Activated B cell treated with CpG ODN at 0.5 μM for 24 hours (primary cell): ENCODE measurements at regions of chr16 and their contacts with region 1.

Region 1: GRCh38 chr16:30724641-30725417 is 23.4 kb upstream of the PHKG2 start:
- DNase-seq: no peak
- ATAC-seq: peak; percentile 25
- H3K4me3 Mint-ChIP-seq: no peak overlapping the region
- H3K27ac Mint-ChIP-seq: no peak overlapping the region
- H3K4me1 Mint-ChIP-seq: peaks cover 18% of the 10 kb centered on the region
- H3K27me3 Mint-ChIP-seq: no peaks in the 10 kb centered on the region
- CTCF ChIP-seq: no peak

Region 2: DNA sequence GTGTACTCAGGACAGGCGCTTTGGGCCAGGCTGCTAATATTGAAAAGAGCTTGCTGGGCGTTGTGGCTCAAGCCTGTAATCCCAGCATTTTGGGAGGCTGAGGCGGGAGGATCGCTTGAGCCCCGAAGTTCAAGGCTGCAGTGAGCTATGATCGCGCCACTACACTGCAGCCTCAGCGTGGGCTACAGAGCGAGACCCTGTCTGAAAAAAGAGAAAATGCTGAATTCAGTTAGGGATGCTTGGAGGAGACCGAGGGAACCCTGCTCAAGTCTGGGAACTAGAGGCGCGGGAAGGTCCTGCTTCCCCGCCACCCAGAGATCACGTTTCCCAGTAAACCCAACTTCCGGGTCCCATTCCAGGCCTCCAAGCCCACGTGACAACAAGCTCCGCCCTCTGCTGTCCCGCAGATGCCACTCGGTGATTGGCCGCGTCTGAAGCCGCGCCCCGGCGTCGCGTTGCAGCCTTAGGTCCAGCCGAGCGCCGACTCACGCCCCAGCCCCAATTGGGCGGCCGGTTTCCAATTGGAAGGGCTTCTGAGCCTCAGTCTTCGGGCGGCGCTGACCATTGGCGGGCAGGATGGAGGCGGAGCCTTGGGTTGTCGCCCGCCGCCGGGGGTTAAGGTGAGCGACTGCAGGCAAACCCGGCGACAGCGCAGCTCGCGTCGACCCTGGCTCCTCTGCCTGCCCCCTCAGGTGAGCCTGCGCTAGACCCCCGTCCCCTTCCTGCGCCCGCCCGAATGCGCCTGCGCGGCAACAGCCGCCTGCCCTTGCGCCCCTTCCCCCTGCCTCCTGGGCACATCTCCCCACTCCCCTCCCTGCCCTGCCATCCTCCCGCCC is 23.2 kb after region 1 on chr16 and contains the start of gene PHKG2:
- CTCF ChIA-PET with region 1: no interaction called
- POLR2A ChIA-PET with region 1: interaction called, 11 read pairs
- intact Hi-C with region 1: no loop called
- DNase-seq: peak; percentile 90
- ATAC-seq: peak; percentile 98
- H3K4me3 Mint-ChIP-seq: peak within 1 kb of the TSS; percentile 91
- H3K27ac Mint-ChIP-seq: peak within 1 kb of the TSS; percentile 87
- H3K4me1 Mint-ChIP-seq: peaks cover 24% of the 10 kb centered on the region
- H3K27me3 Mint-ChIP-seq: no peaks in the 10 kb centered on the region
- CTCF ChIP-seq: no peak
- total RNA-seq, gene PHKG2: 45.3 and 51.4 TPM in 2 replicates